ENCODE measurements at regions of chr2 and their contacts with region 1.

Region 1: GRCh38 chr2:238985041-238985729 is 137.3 kb downstream of the TWIST2 start:
- DNase-seq: no peak
- H3K4me3 ChIP-seq: no peak overlapping the region
- H3K27ac ChIP-seq: no peak overlapping the region
- H3K4me1 ChIP-seq: no peaks in the 10 kb centered on the region
- H3K27me3 ChIP-seq: peaks cover 92% of the 10 kb centered on the region
- CTCF ChIP-seq: no peak

Region 2: DNA sequence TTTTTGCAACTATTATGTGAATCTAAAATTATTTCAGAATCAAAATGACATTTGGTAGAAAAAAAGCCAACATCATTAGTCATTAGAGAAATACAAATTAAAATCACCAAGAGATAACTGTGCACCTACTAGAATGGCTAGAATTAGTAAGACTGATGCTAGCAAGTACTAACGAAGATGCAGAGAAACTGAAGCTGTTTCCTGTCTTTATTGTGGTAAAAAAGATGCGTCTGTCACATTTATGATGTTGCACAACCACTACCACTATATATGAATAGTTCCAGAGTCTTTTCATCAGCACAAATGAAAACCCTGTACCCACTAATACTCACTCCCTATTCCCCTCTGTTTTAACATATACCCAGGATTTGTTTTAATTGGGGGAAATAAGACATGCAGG is 154.0 kb before region 1 on chr2:
- CTCF ChIA-PET with region 1: no interaction called
- POLR2A ChIA-PET with region 1: interaction called, 28 read pairs
- intact Hi-C with region 1: no loop called
- DNase-seq: no peak
- H3K4me3 ChIP-seq: no peak overlapping the region
- H3K27ac ChIP-seq: no peak overlapping the region
- H3K4me1 ChIP-seq: no peaks in the 10 kb centered on the region
- H3K27me3 ChIP-seq: peaks cover 87% of the 10 kb centered on the region
- CTCF ChIP-seq: no peak